AG04449 (cell line): ENCODE measurements at regions of chr4 and their contacts with region 1.

Region 1: GRCh38 chr4:26330186-26330787 is 9.5 kb downstream of the RBPJ start:
- DNase-seq: no peak
- H3K4me3 ChIP-seq: no peak overlapping the region
- CTCF ChIP-seq: peak; percentile 44

Region 2: GRCh38 chr4:25986807-25987206 is 343.5 kb before region 1 on chr4:
- CTCF ChIA-PET with region 1: interaction called, 50 read pairs
- POLR2A ChIA-PET with region 1: no interaction called
- DNase-seq: no peak
- H3K4me3 ChIP-seq: no peak overlapping the region
- CTCF ChIP-seq: no peak

Region 3: GRCh38 chr4:26081795-26082498 is 248.3 kb before region 1 on chr4:
- CTCF ChIA-PET with region 1: interaction called, 25 read pairs
- POLR2A ChIA-PET with region 1: interaction called, 5 read pairs
- DNase-seq: no peak
- H3K4me3 ChIP-seq: no peak overlapping the region
- CTCF ChIP-seq: peak; percentile 30

Region 4: GRCh38 chr4:26342328-26343037 is 12.2 kb after region 1 on chr4:
- CTCF ChIA-PET with region 1: interaction called, 121 read pairs
- POLR2A ChIA-PET with region 1: no interaction called
- DNase-seq: peak; percentile 70
- H3K4me3 ChIP-seq: no peak overlapping the region
- CTCF ChIP-seq: no peak

Region 5: DNA sequence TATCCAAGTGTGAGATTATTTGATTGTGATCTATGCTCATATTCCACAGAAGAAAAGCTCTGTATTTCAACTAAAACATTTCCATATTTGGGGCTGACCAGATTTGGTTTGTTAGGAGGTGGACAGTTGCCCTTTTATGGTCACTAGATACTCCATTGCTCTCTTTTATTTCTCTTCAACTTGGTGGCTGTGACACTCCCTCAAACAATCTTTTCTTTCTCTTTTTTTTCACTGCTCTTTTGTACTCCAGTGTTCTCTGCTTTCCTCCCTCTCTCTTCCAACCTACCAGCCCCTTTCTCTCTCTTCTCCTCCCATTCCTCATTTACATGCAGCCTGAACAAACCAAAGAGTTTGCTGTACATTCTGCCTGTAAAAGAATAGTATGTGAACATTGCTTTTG is 39.3 kb after region 1 on chr4:
- CTCF ChIA-PET with region 1: interaction called, 20 read pairs
- POLR2A ChIA-PET with region 1: interaction called, 4 read pairs
- DNase-seq: no peak
- H3K4me3 ChIP-seq: no peak overlapping the region
- CTCF ChIP-seq: no peak

Region 6: DNA sequence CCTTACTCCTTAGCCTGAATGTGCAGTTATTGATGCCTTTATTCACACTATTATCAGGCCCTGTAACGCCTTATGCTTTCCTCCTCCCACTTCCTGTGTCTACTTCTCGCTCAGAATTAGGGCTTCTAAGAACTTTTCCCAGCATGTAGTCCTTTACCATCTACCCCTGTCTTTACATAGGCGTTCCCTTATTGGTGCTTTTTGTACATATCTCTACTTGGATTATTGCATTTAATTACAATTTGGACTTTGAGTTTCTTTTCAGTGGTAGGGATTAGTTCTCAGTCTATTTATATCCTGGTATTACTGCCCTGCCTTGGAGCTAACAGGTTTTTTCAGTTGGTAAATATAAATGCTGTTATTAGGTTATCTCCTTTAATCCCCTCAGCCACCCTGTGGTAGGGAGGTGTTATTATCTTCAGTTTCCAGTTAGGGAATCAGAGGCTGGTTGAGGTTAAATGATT is 74.5 kb after region 1 on chr4:
- CTCF ChIA-PET with region 1: interaction called, 211 read pairs
- POLR2A ChIA-PET with region 1: interaction called, 3 read pairs
- DNase-seq: no peak
- H3K4me3 ChIP-seq: no peak overlapping the region
- CTCF ChIP-seq: no peak

Region 7: GRCh38 chr4:26424838-26425237 is 94.6 kb after region 1 on chr4:
- CTCF ChIA-PET with region 1: interaction called, 42 read pairs
- POLR2A ChIA-PET with region 1: interaction called, 3 read pairs
- DNase-seq: no peak
- H3K4me3 ChIP-seq: no peak overlapping the region
- CTCF ChIP-seq: no peak

Region 8: GRCh38 chr4:26609391-26609790 is 279.1 kb after region 1 on chr4:
- CTCF ChIA-PET with region 1: no interaction called
- POLR2A ChIA-PET with region 1: no interaction called
- DNase-seq: no peak
- H3K4me3 ChIP-seq: no peak overlapping the region
- CTCF ChIP-seq: no peak

Region 9: DNA sequence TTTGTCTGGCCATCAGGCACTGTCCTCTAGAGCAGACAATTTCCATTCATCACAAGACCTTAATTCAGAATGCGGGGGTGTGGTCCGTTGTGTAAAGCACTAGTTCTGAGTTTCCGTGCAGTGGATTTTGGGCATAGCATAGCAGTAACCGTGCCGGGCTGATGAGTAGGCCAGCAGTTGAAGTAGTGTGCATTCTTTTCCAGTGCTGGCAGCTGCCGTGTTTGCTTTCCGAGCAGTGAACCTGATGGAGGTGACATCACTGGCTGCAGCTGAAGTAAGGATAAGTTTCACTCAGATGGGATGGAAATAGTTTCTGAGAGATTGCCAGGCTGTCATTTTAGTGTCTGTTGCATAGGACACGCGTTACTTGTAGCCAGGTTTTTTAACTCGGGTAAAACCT is 423.3 kb after region 1 on chr4:
- CTCF ChIA-PET with region 1: no interaction called
- POLR2A ChIA-PET with region 1: no interaction called
- DNase-seq: no peak
- H3K4me3 ChIP-seq: no peak overlapping the region
- CTCF ChIP-seq: no peak